Astrocyte of the cerebellum (primary cell): ENCODE measurements at regions of chr5 and their contacts with region 1.

Region 1: GRCh38 chr5:119478781-119479180 is 26.5 kb downstream of the HSD17B4 start:
- DNase-seq: no peak
- H3K4me3 ChIP-seq: no peak overlapping the region
- CTCF ChIP-seq: no peak

Region 2: DNA sequence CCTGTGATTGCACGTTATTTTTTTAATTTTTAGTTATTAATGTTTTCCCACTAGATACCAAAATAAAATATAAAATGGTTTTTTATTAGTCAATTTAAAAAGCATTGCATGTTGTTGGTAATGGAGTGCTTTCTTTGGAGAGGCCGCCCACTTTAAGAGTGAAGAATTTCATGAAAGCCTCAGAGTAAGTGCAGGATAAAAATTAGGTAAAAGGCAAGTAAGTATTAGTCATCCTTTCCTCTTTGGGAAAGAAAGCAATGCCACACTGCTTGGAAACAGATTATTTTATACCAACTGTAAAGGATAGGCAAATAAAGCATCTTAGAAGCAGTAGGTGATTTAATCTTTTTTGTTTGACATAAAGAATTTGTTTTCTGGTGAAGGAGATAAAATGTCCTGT is 36.4 kb after region 1 on chr5:
- in situ Hi-C with region 1: no loop called
- DNase-seq: peak; percentile 9
- H3K4me3 ChIP-seq: no peak overlapping the region
- CTCF ChIP-seq: no peak

Region 3: DNA sequence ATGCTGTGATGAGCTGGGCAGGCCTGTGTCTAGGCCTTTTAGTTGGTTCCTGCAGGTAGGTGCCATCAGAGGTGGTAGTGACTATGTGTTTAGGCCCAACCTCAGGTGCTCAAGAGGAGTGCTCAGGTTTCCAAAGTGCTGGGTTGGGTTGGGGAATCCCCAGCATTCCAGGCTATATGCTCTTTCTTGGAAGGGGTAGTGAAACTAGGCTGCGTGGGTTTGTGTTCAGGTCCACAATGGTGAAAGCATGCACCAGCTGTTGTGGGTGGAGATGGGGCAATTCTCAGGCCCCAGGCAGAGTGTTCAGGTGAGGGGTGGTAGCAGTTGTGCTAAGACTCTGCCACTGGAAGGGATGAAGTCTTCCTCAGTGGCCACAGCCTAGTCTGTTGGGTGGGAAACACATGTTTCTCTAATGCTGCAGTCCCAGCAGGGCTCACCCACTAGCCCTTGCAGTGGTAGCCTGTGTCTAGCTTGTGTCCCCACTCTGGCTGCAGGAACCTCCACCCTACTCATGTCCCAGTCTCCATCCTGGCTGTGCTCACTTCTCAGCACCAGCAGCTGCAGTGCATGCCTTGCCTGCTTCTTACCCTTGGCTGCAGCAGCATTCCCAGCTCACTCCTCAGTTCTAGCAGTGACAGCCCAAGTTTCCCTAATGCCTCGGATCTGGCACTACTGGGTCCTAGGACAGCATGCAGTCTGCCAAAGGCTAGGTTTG is 229.5 kb after region 1 on chr5:
- in situ Hi-C with region 1: no loop called
- DNase-seq: no peak
- H3K4me3 ChIP-seq: no peak overlapping the region
- CTCF ChIP-seq: no peak

Region 4: DNA sequence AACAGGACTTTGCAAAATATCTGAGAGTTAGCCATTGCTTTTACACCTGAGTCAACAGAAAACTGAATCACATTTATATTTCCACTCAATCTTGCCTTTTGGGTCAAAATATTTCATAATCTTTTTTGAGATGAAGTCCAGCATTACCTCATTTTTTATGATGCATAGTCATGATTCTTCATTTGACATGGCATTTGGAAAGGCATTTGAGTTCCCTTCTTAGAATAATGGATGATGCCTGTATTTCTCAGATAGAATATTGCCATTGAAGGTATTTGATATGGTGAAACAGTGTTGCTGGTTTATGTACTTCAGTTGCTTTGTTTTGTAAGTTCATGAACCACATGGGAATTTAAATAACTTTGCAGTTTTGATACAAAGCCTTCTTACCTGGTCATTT is 1165.7 kb after region 1 on chr5:
- in situ Hi-C with region 1: loop called (anchors 25 kb)
- DNase-seq: no peak
- H3K4me3 ChIP-seq: no peak overlapping the region
- CTCF ChIP-seq: no peak